MCF 10A (cell line): ENCODE measurements at regions of chr16 and their contacts with region 1.

Region 1: DNA sequence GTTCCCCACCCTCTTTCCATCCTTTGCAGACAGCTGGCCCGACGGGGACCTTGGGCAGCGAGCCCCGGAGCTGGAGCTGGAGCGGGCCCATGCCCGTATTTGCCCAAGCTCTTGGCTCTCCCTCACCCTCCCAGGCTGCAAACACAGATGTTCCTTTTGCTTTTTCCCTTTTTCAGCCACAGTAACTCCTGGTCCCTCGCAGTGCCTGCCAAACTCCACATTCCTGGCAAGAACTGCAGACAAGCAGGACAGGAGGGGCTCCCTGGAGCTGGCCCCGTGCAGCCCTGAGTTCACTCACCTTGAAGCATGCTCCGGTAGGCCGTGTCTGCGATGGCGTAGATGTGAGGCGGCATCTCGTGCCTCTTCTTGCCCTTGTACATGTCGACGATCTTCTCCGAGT is 33.9 kb downstream of the MYH11 start:
- DNase-seq: no peak
- H3K4me3 Mint-ChIP-seq: no peak overlapping the region
- H3K27ac Mint-ChIP-seq: no peak overlapping the region
- H3K4me1 Mint-ChIP-seq: no peaks in the 10 kb centered on the region
- H3K27me3 Mint-ChIP-seq: peaks cover 26% of the 10 kb centered on the region
- CTCF ChIP-seq: no peak

Region 2: GRCh38 chr16:15765880-15766279 is 57.1 kb before region 1 on chr16:
- CTCF ChIA-PET with region 1: interaction called, 17 read pairs
- POLR2A ChIA-PET with region 1: interaction called, 4 read pairs
- intact Hi-C with region 1: loop called (anchors 1 kb)
- DNase-seq: peak; percentile 49
- H3K4me3 Mint-ChIP-seq: no peak overlapping the region
- H3K27ac Mint-ChIP-seq: no peak overlapping the region
- H3K4me1 Mint-ChIP-seq: no peaks in the 10 kb centered on the region
- H3K27me3 Mint-ChIP-seq: peaks cover 34% of the 10 kb centered on the region
- CTCF ChIP-seq: peak; percentile 68

Region 3: GRCh38 chr16:15777533-15778203 is 45.3 kb before region 1 on chr16:
- CTCF ChIA-PET with region 1: interaction called, 15 read pairs
- POLR2A ChIA-PET with region 1: no interaction called
- intact Hi-C with region 1: no loop called
- DNase-seq: peak; percentile 49
- H3K4me3 Mint-ChIP-seq: no peak overlapping the region
- H3K27ac Mint-ChIP-seq: no peak overlapping the region
- H3K4me1 Mint-ChIP-seq: no peaks in the 10 kb centered on the region
- H3K27me3 Mint-ChIP-seq: peaks cover 33% of the 10 kb centered on the region
- CTCF ChIP-seq: peak; percentile 38

Region 4: DNA sequence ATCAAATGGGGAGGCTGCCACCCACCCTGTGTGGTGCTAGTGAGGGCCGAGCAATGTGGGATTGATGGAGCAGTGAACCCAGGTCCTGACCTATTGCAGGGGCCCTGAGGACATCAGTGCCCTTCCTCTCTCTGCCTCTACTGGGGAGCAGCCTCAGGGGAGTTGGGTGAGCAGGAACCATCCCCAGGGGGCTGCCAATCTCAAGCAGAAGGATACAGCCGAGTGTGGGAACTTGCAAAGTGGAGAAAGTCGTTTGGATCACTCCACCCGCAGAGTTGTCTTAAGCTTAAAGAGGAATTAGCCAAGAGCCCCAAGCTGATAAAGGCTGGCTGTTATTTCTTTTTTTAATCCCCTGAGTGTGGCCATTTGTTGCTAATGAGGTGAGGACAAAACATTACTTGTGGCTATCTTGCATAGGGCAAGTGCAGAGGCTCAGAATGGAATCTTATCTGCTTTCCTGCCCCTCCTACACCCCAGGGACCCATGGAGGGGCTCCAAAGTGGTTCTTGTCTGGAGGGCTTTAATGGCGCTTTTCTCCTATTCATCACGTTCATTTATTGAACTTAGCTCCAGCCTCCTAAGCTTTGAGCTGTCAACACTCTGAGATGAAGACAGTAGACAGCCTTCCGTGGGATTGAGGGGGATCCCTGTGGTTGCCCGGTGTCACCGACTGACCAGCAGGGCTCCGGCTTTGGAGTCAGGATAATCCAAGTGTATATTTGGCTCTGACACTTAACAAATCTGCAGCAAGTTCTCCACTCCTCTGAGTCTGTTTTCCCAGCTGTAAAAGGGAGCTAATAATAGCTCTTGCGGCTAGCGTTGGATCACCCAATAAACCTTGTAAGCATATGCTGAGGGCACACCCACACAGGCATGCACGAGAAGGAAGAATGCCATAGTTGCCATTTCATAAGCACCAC is 11.2 kb before region 1 on chr16:
- CTCF ChIA-PET with region 1: interaction called, 43 read pairs
- POLR2A ChIA-PET with region 1: no interaction called
- intact Hi-C with region 1: no loop called
- DNase-seq: peak; percentile 68
- H3K4me3 Mint-ChIP-seq: no peak overlapping the region
- H3K27ac Mint-ChIP-seq: peak overlapping the region; percentile 19
- H3K4me1 Mint-ChIP-seq: no peaks in the 10 kb centered on the region
- H3K27me3 Mint-ChIP-seq: peaks cover 39% of the 10 kb centered on the region
- CTCF ChIP-seq: no peak

Region 5: GRCh38 chr16:15834502-15834901 is 11.5 kb after region 1 on chr16:
- CTCF ChIA-PET with region 1: interaction called, 18 read pairs
- POLR2A ChIA-PET with region 1: no interaction called
- intact Hi-C with region 1: no loop called
- DNase-seq: no peak
- H3K4me3 Mint-ChIP-seq: no peak overlapping the region
- H3K27ac Mint-ChIP-seq: no peak overlapping the region
- H3K4me1 Mint-ChIP-seq: no peaks in the 10 kb centered on the region
- H3K27me3 Mint-ChIP-seq: no peaks in the 10 kb centered on the region
- CTCF ChIP-seq: no peak

Region 6: DNA sequence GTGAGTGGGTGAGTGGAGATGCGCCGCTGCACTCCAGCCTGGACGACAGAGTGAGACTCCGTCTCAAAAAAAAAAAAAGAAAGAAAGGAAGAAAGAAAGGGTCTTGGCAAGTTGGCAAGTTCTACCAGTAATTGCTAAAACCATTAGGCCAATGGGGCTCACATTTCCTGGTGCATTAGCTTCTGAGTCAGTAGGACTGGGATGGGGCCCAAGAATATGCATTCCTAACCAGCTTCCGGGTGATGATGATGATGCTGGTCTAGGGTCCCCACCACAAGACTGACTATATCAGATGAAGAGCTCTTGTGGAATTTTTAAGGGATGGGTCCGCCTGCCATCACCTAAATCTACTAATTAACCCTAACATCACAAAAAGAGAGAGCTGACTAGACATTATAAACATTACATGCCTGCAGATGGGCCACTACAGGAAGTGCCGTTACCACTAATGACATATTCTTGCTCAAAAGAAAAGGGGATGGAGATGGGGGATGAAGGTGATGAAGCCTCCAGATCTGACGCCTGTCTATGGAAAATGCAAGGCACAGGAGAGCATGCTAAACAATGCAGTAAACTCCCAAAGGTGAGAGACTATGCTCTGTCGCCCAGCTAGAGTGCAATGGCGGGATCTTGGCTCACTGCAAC is 20.8 kb after region 1 on chr16:
- CTCF ChIA-PET with region 1: interaction called, 12 read pairs
- POLR2A ChIA-PET with region 1: interaction called, 3 read pairs
- intact Hi-C with region 1: no loop called
- DNase-seq: no peak
- H3K4me3 Mint-ChIP-seq: no peak overlapping the region
- H3K27ac Mint-ChIP-seq: no peak overlapping the region
- H3K4me1 Mint-ChIP-seq: no peaks in the 10 kb centered on the region
- H3K27me3 Mint-ChIP-seq: peaks cover 28% of the 10 kb centered on the region
- CTCF ChIP-seq: no peak

Region 7: GRCh38 chr16:15988268-15989013 is 165.5 kb after region 1 on chr16:
- CTCF ChIA-PET with region 1: no interaction called
- POLR2A ChIA-PET with region 1: no interaction called
- intact Hi-C with region 1: no loop called
- DNase-seq: no peak
- H3K4me3 Mint-ChIP-seq: no peak overlapping the region
- H3K27ac Mint-ChIP-seq: peak overlapping the region; percentile 65
- H3K4me1 Mint-ChIP-seq: peaks cover 20% of the 10 kb centered on the region
- H3K27me3 Mint-ChIP-seq: no peaks in the 10 kb centered on the region
- CTCF ChIP-seq: no peak

Region 8: DNA sequence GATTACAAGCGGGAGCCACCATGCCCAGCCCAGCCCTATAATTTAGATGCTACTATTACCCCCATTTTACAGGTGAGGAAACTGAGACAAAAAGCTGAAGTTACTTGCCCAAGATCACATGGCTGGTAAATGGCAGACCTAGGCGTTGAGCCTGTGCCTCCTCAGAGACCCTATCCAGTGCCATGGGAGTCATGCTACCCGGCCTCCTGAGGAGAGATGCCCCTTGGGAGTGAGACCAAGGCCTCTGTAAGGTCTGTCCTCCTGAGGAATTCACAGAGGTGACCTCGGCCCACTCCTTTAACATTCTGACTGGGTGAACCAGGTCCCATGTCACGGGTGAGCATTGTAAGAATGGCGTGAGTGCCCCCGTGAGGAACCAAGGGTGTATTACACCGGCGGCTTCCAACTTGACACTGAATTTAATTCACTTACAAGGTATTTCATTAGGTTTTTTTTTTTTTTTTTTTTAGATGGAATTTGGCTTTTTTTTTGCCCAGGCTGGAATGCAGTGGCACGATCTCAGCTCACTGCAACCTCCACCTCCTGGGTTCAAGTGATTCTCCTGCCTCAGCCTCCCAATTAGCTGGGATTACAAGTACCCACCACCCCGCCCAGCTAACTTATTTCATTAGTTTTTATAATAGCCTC is 304.6 kb after region 1 on chr16:
- CTCF ChIA-PET with region 1: interaction called, 6 read pairs
- POLR2A ChIA-PET with region 1: interaction called, 3 read pairs
- intact Hi-C with region 1: loop called (anchors 5 kb)
- DNase-seq: peak; percentile 74
- H3K4me3 Mint-ChIP-seq: no peak overlapping the region
- H3K27ac Mint-ChIP-seq: no peak overlapping the region
- H3K4me1 Mint-ChIP-seq: no peaks in the 10 kb centered on the region
- H3K27me3 Mint-ChIP-seq: no peaks in the 10 kb centered on the region
- CTCF ChIP-seq: peak; percentile 78